Naive thymus-derived CD4-positive, alpha-beta T cell (primary cell): ENCODE measurements at regions of chr7 and their contacts with region 1.

Region 1: DNA sequence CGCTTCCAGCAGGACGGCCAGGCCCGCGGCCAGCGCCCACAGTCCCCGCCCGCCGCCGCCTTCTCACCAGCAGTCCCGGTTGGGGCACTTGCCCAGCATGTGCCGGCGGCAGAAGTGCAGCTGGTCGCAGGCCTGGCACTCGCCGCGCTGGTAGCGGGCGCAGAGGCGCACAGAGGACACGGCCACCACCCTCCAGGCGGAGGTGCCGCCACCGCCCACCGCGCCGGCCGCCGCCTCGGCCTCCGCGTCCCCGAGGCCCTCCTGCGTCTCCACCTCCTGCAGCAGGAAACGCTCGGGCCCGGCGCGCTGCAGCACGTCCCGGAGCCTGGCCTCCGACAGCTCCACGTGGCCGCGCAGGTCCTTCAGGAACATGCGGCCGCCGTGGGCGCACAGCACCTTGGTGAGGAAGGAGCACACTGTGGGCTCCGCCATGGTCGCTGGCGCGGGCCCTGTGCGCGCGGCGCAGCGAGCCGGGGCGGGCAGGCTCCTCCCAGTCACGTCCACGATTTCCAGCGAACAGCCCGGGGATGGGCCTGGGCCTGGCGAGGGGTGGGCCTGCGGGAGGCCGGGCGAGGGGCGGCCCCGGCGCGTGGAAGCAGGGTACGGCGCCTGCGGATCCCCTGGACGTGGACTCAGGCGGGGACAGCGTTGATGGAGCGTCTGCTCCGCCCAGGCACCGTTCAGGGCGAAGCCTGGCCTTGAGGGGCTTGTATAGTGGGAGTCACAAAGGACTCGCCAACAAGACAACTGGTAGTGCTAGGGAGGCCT is at the start of gene ZC3HAV1L:
- DNase-seq: peak in 4 of 9 donors; percentile 25 to 77 (median 29)
- ATAC-seq: peak; percentile 80
- H3K4me3 ChIP-seq: peak within 1 kb of the TSS; percentile 55
- H3K4me3 Mint-ChIP-seq: peak within 1 kb of the TSS; percentile 62 to 91 (median 80)
- H3K27ac ChIP-seq: no peak within 1 kb of the TSS
- H3K27ac Mint-ChIP-seq: peak within 1 kb of the TSS in 3 of 9 donors; percentile 45 to 86 (median 53)
- H3K4me1 ChIP-seq: peaks cover 0 to 6% of the 10 kb centered on the region in 2 donors
- H3K4me1 Mint-ChIP-seq: peaks cover 7 to 43% (median 14%) of the 10 kb centered on the region in 7 donors
- H3K27me3 ChIP-seq: no peaks in the 10 kb centered on the region
- H3K27me3 Mint-ChIP-seq: no peaks in the 10 kb centered on the region
- total RNA-seq, gene ZC3HAV1L: 0.35 to 26.7 (median 0.78) TPM

Region 2: DNA sequence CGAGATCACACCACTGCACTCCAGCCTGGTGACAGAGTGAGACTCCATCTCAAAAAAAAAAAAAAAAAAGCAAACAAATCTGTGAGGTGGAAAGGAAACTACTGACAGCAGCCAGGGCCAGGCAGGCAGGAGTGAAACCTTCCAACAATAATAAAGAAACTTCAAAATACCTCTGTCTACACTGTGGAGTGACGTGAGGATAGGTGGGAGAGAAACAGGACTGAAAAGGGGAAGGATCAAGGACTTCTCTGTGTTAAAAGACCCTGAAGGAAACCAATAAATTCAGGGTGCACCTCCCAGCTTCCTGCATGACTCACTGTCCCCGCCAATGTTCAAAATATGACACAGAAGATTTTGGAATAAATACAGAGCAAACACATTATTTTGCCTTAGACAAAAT is 137.5 kb before region 1 on chr7:
- CTCF ChIA-PET with region 1: no interaction called
- POLR2A ChIA-PET with region 1: no interaction called
- intact Hi-C with region 1: loop called in 1 of 2 experiments (anchors 5 kb)
- DNase-seq: peak in 4 of 9 donors; percentile 14 to 36 (median 18)
- ATAC-seq: peak; percentile 49
- H3K4me3 ChIP-seq: no peak overlapping the region
- H3K4me3 Mint-ChIP-seq: peak overlapping the region in 7 of 10 donors; percentile 12 to 56 (median 27)
- H3K27ac ChIP-seq: no peak overlapping the region
- H3K27ac Mint-ChIP-seq: peak overlapping the region in 7 of 9 donors; percentile 16 to 75 (median 46)
- H3K4me1 ChIP-seq: peaks cover 9 to 26% of the 10 kb centered on the region in 2 donors
- H3K4me1 Mint-ChIP-seq: peaks cover 20 to 53% (median 48%) of the 10 kb centered on the region in 7 donors
- H3K27me3 ChIP-seq: no peaks in the 10 kb centered on the region
- H3K27me3 Mint-ChIP-seq: peaks cover 0 to 66% (median 0%) of the 10 kb centered on the region in 5 donors

Region 3: GRCh38 chr7:139016931-139017511 is 18.7 kb before region 1 on chr7:
- CTCF ChIA-PET with region 1: interaction called, 4 read pairs
- POLR2A ChIA-PET with region 1: interaction called, 4 read pairs
- intact Hi-C with region 1: loop called in 1 of 2 experiments (anchors 2 kb)
- DNase-seq: peak; percentile 17 to 76 (median 52)
- ATAC-seq: peak; percentile 94
- H3K4me3 ChIP-seq: no peak overlapping the region
- H3K4me3 Mint-ChIP-seq: no peak overlapping the region
- H3K27ac ChIP-seq: no peak overlapping the region
- H3K27ac Mint-ChIP-seq: peak overlapping the region in 1 of 9 donors; percentile 52
- H3K4me1 ChIP-seq: no peaks in the 10 kb centered on the region
- H3K4me1 Mint-ChIP-seq: peaks cover 0 to 10% (median 6%) of the 10 kb centered on the region in 7 donors
- H3K27me3 ChIP-seq: no peaks in the 10 kb centered on the region
- H3K27me3 Mint-ChIP-seq: peaks cover 0 to 16% (median 5%) of the 10 kb centered on the region in 5 donors